ENCODE measurements at regions of chr9 and their contacts with region 1.

Region 1: GRCh38 chr9:124257844-124258606 is at the start of gene NEK6:
- DNase-seq: peak; percentile 62 to 84
- ATAC-seq: peak; percentile 51
- H3K4me3 ChIP-seq: peak within 1 kb of the TSS; percentile 67 to 87
- H3K27ac ChIP-seq: peak within 1 kb of the TSS; percentile 58 to 87
- H3K4me1 ChIP-seq: peaks cover 2 to 9% of the 10 kb centered on the region in 2 donors
- H3K27me3 ChIP-seq: no peaks in the 10 kb centered on the region
- total RNA-seq, gene NEK6: 60.5 to 72.8 TPM

Region 2: DNA sequence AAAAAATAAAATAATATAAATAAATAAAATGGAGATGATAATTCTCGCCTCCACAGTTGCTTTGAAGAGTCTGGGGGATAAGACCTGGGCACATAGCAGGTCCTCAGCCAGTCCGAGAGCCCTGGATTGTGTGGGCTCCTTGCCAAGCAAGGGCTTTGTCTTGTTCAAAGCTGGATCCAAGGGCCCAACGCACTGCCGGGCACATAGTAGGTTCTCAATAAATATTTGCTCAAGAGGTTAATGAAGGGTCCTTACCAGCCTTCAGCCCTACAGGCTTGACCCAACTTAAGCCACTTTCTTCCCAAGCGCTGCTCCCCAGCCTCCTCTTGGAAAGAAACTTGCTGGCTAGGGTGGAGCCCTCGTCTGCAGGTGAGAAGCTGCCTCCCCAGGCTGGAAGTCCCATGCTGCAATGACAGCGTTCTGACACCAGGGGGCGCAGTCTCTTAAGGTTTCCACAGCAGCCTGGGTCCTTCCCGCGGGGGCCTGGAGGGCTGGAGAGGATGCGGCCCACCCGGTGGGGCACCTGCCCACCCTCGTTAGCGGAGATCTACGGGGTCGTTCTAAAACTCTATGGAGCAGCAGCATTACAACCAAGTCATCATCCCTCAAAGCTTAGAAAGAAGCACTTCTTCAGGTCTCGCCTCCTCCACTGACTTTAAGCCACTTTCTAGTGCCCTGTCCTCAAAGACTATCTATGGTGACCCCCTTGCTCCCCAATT is 131.3 kb before region 1 on chr9:
- intact Hi-C with region 1: loop called in 1 of 2 experiments (anchors 10 kb)
- DNase-seq: peak; percentile 77 to 91
- ATAC-seq: peak; percentile 70
- H3K4me3 ChIP-seq: no peak overlapping the region
- H3K27ac ChIP-seq: no peak overlapping the region
- H3K4me1 ChIP-seq: peaks cover 0 to 4% of the 10 kb centered on the region in 2 donors
- H3K27me3 ChIP-seq: no peaks in the 10 kb centered on the region

Region 3: GRCh38 chr9:124222918-124223720 is 34.9 kb before region 1 on chr9:
- intact Hi-C with region 1: no loop called
- DNase-seq: peak; percentile 85 to 93
- ATAC-seq: peak; percentile 54
- H3K4me3 ChIP-seq: no peak overlapping the region
- H3K27ac ChIP-seq: no peak overlapping the region
- H3K4me1 ChIP-seq: no peaks in the 10 kb centered on the region
- H3K27me3 ChIP-seq: no peaks in the 10 kb centered on the region

Region 4: DNA sequence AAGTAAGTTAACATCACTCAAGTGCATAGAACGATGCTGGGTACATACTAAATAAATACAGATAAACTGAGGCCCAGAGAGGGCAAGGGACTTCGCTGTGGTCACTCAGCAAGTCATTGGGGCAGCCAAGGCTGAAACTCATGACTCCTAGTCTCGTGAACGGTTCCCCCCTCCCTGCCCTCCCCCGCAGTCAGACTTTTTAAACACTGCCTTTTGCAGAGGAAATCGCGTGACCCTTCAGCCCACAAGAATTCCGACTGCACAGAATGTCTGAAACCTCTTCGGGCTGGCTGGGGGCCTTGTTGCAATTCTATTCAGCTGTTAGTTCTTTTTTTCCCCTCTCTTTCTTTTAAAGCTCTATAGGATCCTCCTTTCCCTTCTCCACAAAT is 27.9 kb after region 1 on chr9:
- intact Hi-C with region 1: loop called in 1 of 2 experiments (anchors 2 kb)
- DNase-seq: peak; percentile 88 to 93
- ATAC-seq: peak; percentile 56
- H3K4me3 ChIP-seq: no peak overlapping the region
- H3K27ac ChIP-seq: peak overlapping the region in 1 of 2 donors; percentile 87
- H3K4me1 ChIP-seq: peaks cover 0 to 4% of the 10 kb centered on the region in 2 donors
- H3K27me3 ChIP-seq: no peaks in the 10 kb centered on the region

Region 5: GRCh38 chr9:124309665-124310064 is 51.6 kb after region 1 on chr9:
- intact Hi-C with region 1: loop called in 1 of 2 experiments (anchors 5 kb)
- DNase-seq: peak; percentile 88 to 89
- ATAC-seq: peak; percentile 76
- H3K4me3 ChIP-seq: no peak overlapping the region
- H3K27ac ChIP-seq: no peak overlapping the region
- H3K4me1 ChIP-seq: no peaks in the 10 kb centered on the region
- H3K27me3 ChIP-seq: no peaks in the 10 kb centered on the region

Region 6: DNA sequence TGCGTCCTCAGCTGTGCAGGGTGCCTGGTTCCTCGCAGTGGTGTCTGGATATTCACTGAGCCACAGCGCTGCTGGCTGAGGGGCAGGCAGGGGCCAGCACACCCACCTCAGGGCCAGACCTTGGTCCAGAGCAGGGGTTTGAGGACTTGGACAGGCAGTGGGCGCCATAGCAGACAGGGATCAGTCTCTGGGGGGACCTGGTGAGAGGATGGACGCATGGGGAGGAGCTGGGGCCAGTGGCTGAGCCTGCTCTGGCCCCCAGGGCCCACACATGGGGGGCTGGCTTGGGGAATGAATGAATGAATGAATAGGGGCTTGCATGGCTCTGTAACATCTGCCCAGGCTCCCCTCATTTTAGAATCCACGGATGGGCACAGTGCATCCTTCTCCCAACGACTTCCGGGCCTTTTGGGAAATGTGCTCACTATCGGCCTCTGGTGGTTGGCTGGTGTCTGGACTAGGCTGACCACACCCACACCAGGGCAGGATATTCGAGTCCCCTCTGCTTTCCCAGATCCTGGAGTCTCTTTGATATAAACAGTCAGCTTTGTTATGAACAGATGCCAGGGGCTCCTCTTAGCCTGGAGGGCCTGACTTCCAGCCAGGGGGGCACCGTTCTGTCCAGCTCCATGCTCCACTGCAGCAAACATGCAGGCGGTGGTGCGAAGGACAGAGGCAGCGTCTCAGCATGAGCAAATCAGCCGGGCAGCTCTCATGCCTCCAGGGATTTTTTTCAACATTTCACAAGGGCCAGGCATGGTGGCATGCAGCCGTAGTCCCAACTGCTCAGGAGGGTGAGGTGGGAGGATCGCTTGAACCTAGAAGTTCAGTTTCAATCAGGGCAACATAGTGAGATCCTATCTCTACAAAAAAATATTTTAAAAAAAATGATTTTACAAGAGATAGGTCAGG is 62.3 kb after region 1 on chr9:
- intact Hi-C with region 1: loop called in 1 of 2 experiments (anchors 5 kb)
- DNase-seq: peak; percentile 73 to 85
- ATAC-seq: peak; percentile 78
- H3K4me3 ChIP-seq: no peak overlapping the region
- H3K27ac ChIP-seq: no peak overlapping the region
- H3K4me1 ChIP-seq: no peaks in the 10 kb centered on the region
- H3K27me3 ChIP-seq: no peaks in the 10 kb centered on the region

Measured in aorta (tissue), 5 donors.